ENCODE measurements at regions of chr14 and their contacts with region 1.

Region 1: GRCh38 chr14:94689218-94689984 is 77.2 kb downstream of the SERPINA3 start:
- DNase-seq: peak; percentile 67
- H3K4me3 Mint-ChIP-seq: no peak overlapping the region
- H3K27ac Mint-ChIP-seq: no peak overlapping the region
- H3K4me1 Mint-ChIP-seq: no peaks in the 10 kb centered on the region
- H3K27me3 Mint-ChIP-seq: peaks cover 12% of the 10 kb centered on the region

Region 2: GRCh38 chr14:94517641-94518257 is 171.7 kb before region 1 on chr14:
- CTCF ChIA-PET with region 1: no interaction called
- POLR2A ChIA-PET with region 1: no interaction called
- intact Hi-C with region 1: no loop called
- DNase-seq: no peak
- H3K4me3 Mint-ChIP-seq: no peak overlapping the region
- H3K27ac Mint-ChIP-seq: no peak overlapping the region
- H3K4me1 Mint-ChIP-seq: no peaks in the 10 kb centered on the region
- H3K27me3 Mint-ChIP-seq: peaks cover 8% of the 10 kb centered on the region

Region 3: GRCh38 chr14:94728950-94729349 is 39.5 kb after region 1 on chr14:
- CTCF ChIA-PET with region 1: no interaction called
- POLR2A ChIA-PET with region 1: no interaction called
- intact Hi-C with region 1: no loop called
- DNase-seq: no peak
- H3K4me3 Mint-ChIP-seq: no peak overlapping the region
- H3K27ac Mint-ChIP-seq: no peak overlapping the region
- H3K4me1 Mint-ChIP-seq: no peaks in the 10 kb centered on the region
- H3K27me3 Mint-ChIP-seq: peaks cover 7% of the 10 kb centered on the region

Region 4: DNA sequence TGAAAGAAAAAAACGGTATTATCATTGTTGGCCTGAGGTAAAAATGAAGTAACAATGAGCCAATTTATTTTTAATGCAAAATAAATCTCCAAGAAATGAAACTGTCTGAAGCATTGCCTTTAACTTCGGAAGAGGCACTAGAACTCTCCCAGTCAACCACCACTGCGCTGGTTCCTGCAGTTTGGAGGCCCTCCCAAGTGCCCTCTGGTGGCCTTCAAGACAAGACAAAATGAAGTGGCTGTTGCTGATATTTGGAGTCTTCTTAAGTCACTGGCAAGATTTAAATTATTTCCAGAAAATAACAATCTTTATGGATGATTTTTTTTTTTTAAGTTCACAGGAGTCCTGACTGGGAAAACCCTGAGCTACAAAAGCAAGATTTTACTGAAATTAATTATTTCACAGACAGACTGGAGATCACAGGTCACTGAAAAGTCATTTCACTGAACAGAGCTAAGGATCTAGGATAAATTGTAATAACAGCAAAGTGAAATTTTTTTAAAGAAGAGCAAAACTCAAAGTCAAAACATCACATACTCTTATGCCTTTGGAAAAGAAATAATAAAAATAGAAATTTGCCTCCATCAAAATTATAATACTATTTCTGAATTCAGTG is 409.7 kb after region 1 on chr14:
- CTCF ChIA-PET with region 1: interaction called, 3 read pairs
- POLR2A ChIA-PET with region 1: no interaction called
- intact Hi-C with region 1: loop called (anchors 5 kb)
- DNase-seq: peak; percentile 46
- H3K4me3 Mint-ChIP-seq: no peak overlapping the region
- H3K27ac Mint-ChIP-seq: no peak overlapping the region
- H3K4me1 Mint-ChIP-seq: peaks cover 11% of the 10 kb centered on the region
- H3K27me3 Mint-ChIP-seq: no peaks in the 10 kb centered on the region

Region 5: GRCh38 chr14:95196290-95196689 is 506.9 kb after region 1 on chr14:
- CTCF ChIA-PET with region 1: interaction called, 6 read pairs
- POLR2A ChIA-PET with region 1: no interaction called
- intact Hi-C with region 1: loop called (anchors 2 kb)
- DNase-seq: no peak
- H3K4me3 Mint-ChIP-seq: no peak overlapping the region
- H3K27ac Mint-ChIP-seq: no peak overlapping the region
- H3K4me1 Mint-ChIP-seq: peaks cover 3% of the 10 kb centered on the region
- H3K27me3 Mint-ChIP-seq: no peaks in the 10 kb centered on the region

Measured in activated CD4-positive, alpha-beta memory T cell treated with anti-CD3 and anti-CD28 coated beads for 36 hours (primary cell).